Activated CD4-positive, alpha-beta memory T cell treated with anti-CD3 and anti-CD28 coated beads for 36 hours (primary cell): ENCODE measurements at regions of chr1 and their contacts with region 1.

Region 1: DNA sequence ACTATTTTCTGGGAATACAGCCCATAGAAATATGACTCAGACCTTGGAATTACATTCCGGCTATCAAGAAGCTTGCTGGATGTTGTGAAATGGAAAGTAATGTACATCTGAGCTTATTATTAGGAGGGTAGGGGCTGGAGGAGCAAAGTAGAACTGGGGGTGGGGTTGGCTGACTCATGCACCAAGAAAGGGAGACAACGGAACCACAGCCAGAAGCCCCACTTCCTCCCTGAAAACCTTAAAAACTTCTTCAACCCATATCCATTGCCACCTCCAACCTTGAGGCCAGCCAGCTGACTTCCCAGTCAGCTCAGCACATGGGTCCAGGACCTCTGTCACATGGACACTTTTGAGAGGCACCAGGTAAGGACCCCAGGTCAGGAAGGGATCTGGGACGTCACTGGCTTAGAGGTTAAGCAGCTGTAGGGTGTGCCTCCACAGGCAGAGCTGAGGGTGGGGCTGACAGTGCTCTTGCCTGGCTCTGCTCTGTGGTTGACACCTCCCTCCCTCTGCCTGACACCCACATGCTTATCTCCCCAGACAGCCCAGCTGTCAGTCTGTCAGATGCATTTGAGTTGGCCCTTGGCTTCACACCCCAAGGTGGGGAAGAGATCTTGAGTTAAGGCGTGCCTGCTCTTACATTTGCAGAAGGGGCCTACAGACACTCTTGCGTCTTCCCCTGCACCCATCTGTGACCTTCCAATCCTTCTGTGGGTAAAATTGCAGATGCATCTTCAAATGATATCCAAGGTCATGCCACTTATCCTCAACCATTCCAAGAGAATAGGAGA is 5.7 kb upstream of the ZNF683 start:
- DNase-seq: peak; percentile 81
- H3K4me3 Mint-ChIP-seq: peak overlapping the region; percentile 30
- H3K27ac Mint-ChIP-seq: peak overlapping the region; percentile 57
- H3K4me1 Mint-ChIP-seq: peaks cover 60% of the 10 kb centered on the region
- H3K27me3 Mint-ChIP-seq: no peaks in the 10 kb centered on the region

Region 2: DNA sequence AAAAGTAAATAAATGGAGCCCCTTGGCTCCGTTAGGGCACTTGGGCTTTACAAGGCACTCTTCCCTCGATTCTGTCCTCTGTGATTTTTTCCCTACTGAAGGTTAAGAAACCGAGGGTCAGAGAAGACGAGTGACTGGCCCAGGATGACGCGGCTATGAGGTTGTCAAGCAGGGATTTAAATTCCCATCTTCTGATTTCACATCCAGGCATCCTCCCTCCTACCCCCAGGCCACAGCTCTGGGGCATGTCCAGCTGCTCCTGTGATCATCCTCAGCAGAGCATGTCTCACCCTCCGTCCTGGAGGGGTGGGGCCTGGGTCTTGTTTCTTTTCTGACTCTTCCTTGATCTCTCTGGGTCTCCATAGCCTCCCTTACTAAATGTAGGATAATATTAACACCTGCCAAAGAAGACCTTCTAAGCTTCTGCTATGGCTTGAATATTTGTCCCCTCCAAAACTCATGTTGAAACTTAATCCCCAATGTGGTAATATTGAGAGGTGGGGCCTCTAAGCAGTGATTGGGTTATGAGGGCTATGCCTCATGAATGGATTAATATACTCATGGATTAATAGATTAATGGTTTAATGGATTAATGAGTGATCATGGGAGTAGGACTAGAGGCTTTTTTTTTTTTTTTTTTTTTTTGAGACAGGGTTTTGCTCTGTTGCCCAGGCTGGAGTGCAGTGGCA is 29.0 kb before region 1 on chr1:
- CTCF ChIA-PET with region 1: no interaction called
- POLR2A ChIA-PET with region 1: no interaction called
- intact Hi-C with region 1: no loop called
- DNase-seq: no peak
- H3K4me3 Mint-ChIP-seq: no peak overlapping the region
- H3K27ac Mint-ChIP-seq: no peak overlapping the region
- H3K4me1 Mint-ChIP-seq: no peaks in the 10 kb centered on the region
- H3K27me3 Mint-ChIP-seq: no peaks in the 10 kb centered on the region

Region 3: DNA sequence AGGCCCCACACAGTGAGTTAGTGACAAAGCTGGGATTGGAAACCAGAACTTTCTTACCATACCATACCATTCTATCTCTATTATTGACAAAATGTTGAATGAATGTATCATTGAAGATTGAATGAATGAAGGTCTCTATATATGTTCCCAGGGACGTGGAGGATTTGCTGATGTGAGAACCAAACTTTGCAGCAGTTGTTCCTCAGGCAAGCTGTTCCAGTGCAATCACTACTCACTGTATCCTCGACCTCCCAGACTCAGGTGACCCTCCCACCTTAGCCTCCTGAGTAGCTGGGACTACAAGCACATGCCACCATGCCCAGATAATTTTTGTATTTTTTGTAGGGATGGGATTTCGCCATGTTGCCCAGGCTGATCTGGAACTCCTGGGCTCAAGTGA is 20.8 kb after region 1 on chr1:
- CTCF ChIA-PET with region 1: interaction called, 4 read pairs
- POLR2A ChIA-PET with region 1: no interaction called
- intact Hi-C with region 1: loop called (anchors 1 kb)
- DNase-seq: no peak
- H3K4me3 Mint-ChIP-seq: no peak overlapping the region
- H3K27ac Mint-ChIP-seq: no peak overlapping the region
- H3K4me1 Mint-ChIP-seq: peaks cover 5% of the 10 kb centered on the region
- H3K27me3 Mint-ChIP-seq: peaks cover 10% of the 10 kb centered on the region